Common myeloid progenitor, CD34-positive (primary cell): ENCODE measurements at regions of chr17 and their contacts with region 1.

Region 1: DNA sequence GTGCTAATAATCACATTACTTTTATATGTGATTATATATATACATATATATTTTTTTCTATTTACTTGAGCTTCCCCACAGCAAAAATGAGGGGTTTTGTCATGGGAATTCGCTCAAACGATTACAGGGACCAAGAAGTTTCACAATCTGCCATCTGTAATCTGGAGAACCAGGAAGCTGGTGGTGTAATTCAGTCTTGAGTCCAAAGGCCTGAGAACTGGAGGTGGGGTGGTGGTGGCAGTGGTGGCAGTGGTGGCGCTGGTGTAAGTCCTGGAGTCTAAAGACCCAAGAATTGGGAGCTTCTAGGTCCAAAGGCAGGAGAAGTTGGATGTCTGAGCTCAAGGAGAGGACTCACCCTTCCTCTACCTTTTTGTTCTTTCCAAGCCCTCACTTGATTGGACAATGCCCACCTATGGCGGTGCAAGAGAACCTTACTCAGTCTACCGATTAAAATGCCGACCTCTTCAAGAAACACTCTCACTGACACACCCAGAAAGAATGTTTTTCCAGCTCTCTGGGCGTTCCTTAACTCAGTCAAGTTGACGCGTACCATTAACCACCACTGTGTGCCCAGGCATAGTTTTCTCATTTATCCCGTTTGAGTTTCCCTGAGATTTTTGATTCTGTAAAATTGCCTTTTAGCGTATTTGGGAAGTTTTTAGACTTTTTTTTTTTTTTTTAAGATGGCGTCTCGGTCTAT is 31.9 kb downstream of the POLR2A start:
- DNase-seq: no peak
- H3K4me3 ChIP-seq: no peak overlapping the region
- H3K27ac ChIP-seq: no peak overlapping the region
- H3K4me1 ChIP-seq: peaks cover 0 to 4% (median 0%) of the 10 kb centered on the region in 4 experiments
- H3K27me3 ChIP-seq: no peaks in the 10 kb centered on the region

Region 2: DNA sequence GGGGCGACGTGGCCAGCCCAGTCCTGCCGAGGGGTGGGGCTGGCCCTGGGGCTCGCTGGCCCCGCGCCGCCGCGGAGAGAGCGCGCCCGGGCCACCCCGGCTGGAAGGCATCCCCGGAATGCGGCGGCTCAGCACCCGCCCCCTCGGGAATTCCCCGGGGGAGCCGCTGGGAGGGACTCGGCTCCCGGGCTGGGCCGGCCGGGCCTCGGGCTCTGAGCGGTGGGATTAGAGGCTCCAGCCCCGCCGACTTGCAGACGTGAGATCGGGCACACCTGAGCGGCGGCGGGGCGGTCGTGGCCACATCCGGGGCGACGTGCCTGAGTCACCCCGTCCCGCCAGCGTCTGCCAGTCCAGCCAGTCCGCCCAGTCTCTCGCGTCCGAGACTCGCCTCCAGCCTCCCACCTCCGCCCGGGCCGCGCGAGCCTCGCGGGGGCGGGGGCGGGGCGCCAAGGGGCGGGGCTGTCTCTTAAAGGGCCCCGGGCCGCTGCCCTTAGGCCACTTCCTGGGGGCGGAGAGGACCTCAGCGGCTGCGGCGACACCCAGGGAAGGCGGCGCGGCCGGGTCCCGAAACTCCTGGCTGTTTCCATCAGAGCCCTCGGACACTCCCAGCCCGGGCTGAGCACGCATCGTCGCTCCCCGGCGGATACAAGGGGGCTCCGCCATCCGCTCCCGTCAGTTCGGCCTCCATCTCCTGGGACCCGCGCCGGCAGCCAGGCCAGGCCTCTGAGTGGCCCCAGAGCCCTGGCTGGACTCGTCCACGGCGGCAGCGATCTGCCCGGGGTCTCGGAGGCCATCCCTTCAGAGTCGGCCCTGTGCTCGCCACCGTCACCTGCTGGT is 164.2 kb before region 1 on chr17 and contains the start of gene KCTD11:
- CTCF ChIA-PET with region 1: interaction called, 19 read pairs
- POLR2A ChIA-PET with region 1: interaction called, 3 read pairs
- DNase-seq: peak in 2 of 3 donors; percentile 26 to 57
- H3K4me3 ChIP-seq: peak within 1 kb of the TSS in 6 of 7 experiments; percentile 52 to 85 (median 74)
- H3K27ac ChIP-seq: peak within 1 kb of the TSS in 1 of 2 experiments; percentile 49
- H3K4me1 ChIP-seq: peaks cover 0 to 35% (median 14%) of the 10 kb centered on the region in 4 experiments
- H3K27me3 ChIP-seq: no peaks in the 10 kb centered on the region

Region 3: GRCh38 chr17:7394452-7395191 is 121.4 kb before region 1 on chr17 and contains the start of gene PLSCR3:
- CTCF ChIA-PET with region 1: no interaction called
- POLR2A ChIA-PET with region 1: no interaction called
- DNase-seq: peak; percentile 64 to 83 (median 78)
- H3K4me3 ChIP-seq: peak within 1 kb of the TSS; percentile 58 to 87 (median 72)
- H3K27ac ChIP-seq: peak within 1 kb of the TSS in 1 of 2 experiments; percentile 73
- H3K4me1 ChIP-seq: peaks cover 0 to 19% (median 15%) of the 10 kb centered on the region in 4 experiments
- H3K27me3 ChIP-seq: no peaks in the 10 kb centered on the region

Region 4: GRCh38 chr17:7435221-7435675 is 80.8 kb before region 1 on chr17 and contains the start of gene TMEM102:
- CTCF ChIA-PET with region 1: interaction called, 20 read pairs
- POLR2A ChIA-PET with region 1: no interaction called
- DNase-seq: peak; percentile 98 to 100 (median 99)
- H3K4me3 ChIP-seq: peak within 1 kb of the TSS; percentile 62 to 95 (median 86)
- H3K27ac ChIP-seq: peak within 1 kb of the TSS; percentile 25 to 55
- H3K4me1 ChIP-seq: peaks cover 0 to 49% (median 45%) of the 10 kb centered on the region in 4 experiments
- H3K27me3 ChIP-seq: peaks cover 0 to 25% (median 9%) of the 10 kb centered on the region in 5 experiments

Region 5: DNA sequence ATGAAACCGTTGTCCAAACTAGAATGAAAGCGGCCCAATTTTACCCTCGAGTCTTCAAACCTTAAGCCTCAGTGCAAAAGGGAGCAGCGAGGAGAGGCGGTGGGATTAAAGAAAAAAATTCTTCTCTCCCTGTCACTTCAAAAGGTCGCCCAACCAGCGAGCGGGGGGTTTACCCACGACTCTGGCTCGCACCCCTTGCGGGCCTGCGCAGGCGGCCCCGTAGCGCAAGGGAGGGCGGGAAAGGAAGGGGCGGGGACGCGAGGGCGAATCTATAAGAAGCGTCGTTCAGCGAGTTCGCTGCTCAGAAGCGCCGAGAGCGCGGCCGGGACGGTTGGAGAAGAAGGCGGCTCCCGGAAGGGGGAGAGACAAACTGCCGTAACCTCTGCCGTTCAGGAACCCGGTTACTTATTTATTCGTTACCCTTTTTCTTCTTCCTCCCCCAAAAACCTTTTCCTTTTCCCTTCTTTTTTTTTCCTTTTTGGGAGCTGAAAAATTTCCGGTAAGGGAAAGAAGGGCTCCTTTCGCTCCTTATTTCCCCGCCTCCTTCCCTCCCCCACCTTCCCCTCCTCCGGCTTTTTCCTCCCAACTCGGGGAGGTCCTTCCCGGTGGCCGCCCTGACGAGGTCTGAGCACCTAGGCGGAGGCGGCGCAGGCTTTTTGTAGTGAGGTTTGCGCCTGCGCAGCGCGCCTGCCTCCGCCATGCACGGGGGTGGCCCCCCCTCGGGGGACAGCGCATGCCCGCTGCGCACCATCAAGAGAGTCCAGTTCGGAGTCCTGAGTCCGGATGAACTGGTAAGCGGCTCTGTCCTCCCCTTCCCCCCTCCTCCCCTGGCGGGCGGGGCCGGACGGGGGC is 31.8 kb before region 1 on chr17 and contains the start of gene POLR2A:
- CTCF ChIA-PET with region 1: interaction called, 11 read pairs
- POLR2A ChIA-PET with region 1: interaction called, 3 read pairs
- DNase-seq: peak; percentile 97 to 99 (median 98)
- H3K4me3 ChIP-seq: peak within 1 kb of the TSS; percentile 59 to 97 (median 84)
- H3K27ac ChIP-seq: peak within 1 kb of the TSS; percentile 99 to 100
- H3K4me1 ChIP-seq: peaks cover 12 to 60% (median 46%) of the 10 kb centered on the region in 4 experiments
- H3K27me3 ChIP-seq: no peaks in the 10 kb centered on the region

Region 6: GRCh38 chr17:7530023-7530900 is 14.2 kb after region 1 on chr17:
- CTCF ChIA-PET with region 1: interaction called, 22 read pairs
- POLR2A ChIA-PET with region 1: interaction called, 3 read pairs
- DNase-seq: no peak
- H3K4me3 ChIP-seq: no peak overlapping the region
- H3K27ac ChIP-seq: no peak overlapping the region
- H3K4me1 ChIP-seq: no peaks in the 10 kb centered on the region
- H3K27me3 ChIP-seq: no peaks in the 10 kb centered on the region

Region 7: DNA sequence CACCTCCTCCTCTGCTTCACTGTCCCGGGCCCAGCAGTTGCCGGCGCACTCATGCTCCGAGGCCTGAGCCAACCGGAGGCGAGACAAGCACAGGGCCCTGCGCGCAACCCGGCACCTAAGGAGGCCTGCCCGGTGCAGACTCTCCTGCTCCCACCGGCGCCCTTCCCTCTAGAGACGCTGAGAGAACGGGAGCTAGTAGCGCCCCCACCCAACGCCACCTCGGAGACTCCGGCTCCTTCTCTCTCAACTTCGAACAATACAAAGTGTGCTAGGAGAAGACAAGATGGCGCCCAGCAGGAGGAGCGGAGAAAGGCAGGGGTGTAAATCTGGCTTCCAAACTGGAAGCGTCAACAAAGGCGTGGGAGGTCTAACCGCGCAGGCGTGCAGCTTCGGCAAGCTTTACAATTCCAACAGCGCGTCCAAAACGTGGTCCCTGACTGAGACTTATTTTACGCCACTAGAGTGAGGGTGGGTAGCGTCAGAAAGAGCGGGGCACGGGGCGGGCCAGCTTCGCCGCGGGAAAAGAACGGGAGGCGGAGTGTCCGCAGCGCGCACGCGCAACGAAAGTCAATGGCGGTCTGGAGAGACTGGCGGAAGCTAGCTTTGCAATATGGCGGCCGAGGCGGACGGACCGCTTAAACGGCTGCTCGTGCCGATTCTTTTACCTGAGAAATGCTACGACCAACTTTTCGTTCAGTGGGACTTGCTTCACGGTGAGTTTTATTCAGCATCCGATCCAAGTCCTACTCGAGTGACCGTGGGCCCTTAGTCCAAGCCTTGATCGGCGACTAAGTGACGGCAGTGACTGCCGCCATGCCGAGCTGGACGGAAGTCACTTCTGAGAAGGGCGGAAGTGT is 67.4 kb after region 1 on chr17 and contains the start of gene MPDU1:
- CTCF ChIA-PET with region 1: interaction called, 20 read pairs
- POLR2A ChIA-PET with region 1: interaction called, 3 read pairs
- DNase-seq: peak; percentile 95 to 98 (median 98)
- H3K4me3 ChIP-seq: peak within 1 kb of the TSS; percentile 56 to 98 (median 92)
- H3K27ac ChIP-seq: peak within 1 kb of the TSS; percentile 99
- H3K4me1 ChIP-seq: peaks cover 4 to 74% (median 66%) of the 10 kb centered on the region in 4 experiments
- H3K27me3 ChIP-seq: no peaks in the 10 kb centered on the region

Region 8: DNA sequence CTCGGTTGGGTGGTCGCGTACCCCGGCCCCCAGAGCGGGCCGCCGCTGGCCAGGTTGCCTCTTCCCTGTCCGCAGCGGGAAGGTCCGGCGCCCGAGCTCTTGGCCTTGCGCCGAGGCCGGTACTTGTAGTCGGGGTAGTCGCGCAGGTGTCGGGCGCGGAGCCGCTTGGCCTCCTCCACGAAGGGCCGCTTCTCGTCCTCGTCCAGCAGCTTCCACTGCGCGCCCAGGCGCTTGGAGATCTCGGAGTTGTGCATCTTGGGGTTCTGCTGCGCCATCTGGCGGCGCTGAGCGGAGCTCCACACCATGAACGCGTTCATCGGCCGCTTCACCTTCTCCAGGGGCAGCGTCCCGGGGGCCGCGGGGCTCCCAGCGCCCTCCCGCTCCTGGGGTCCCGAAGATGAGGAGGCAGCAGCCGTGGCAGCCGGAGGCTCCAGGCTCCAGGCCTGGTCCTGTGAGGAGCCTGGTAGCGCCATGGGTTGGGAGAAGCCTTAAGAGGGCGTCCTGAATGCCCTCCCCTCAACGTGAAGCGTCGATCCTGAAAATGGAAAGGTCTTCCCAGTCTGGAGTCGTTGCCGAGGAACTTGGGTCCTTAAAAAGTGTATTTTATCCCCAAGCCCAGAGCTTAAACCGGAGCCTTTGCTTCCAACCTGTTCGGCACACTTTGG is 73.3 kb after region 1 on chr17:
- CTCF ChIA-PET with region 1: interaction called, 20 read pairs
- POLR2A ChIA-PET with region 1: interaction called, 3 read pairs
- DNase-seq: peak; percentile 77 to 87 (median 78)
- H3K4me3 ChIP-seq: peak overlapping the region in 2 of 7 experiments; percentile 28 to 40
- H3K27ac ChIP-seq: no peak overlapping the region
- H3K4me1 ChIP-seq: peaks cover 0 to 30% (median 18%) of the 10 kb centered on the region in 4 experiments
- H3K27me3 ChIP-seq: no peaks in the 10 kb centered on the region